Heart left ventricle (tissue), 16 donors: ENCODE measurements at regions of chr5 and their contacts with region 1.

Region 1: GRCh38 chr5:172463031-172463430 is 8.7 kb upstream of the SH3PXD2B start:
- DNase-seq: no peak
- ATAC-seq: no peak
- H3K4me3 ChIP-seq: no peak overlapping the region
- H3K27ac ChIP-seq: no peak overlapping the region
- H3K4me1 ChIP-seq: peaks cover 0 to 35% (median 3%) of the 10 kb centered on the region in 12 donors
- H3K27me3 ChIP-seq: no peaks in the 10 kb centered on the region
- CTCF ChIP-seq: no peak
- POLR2A ChIP-seq: no peak

Region 2: DNA sequence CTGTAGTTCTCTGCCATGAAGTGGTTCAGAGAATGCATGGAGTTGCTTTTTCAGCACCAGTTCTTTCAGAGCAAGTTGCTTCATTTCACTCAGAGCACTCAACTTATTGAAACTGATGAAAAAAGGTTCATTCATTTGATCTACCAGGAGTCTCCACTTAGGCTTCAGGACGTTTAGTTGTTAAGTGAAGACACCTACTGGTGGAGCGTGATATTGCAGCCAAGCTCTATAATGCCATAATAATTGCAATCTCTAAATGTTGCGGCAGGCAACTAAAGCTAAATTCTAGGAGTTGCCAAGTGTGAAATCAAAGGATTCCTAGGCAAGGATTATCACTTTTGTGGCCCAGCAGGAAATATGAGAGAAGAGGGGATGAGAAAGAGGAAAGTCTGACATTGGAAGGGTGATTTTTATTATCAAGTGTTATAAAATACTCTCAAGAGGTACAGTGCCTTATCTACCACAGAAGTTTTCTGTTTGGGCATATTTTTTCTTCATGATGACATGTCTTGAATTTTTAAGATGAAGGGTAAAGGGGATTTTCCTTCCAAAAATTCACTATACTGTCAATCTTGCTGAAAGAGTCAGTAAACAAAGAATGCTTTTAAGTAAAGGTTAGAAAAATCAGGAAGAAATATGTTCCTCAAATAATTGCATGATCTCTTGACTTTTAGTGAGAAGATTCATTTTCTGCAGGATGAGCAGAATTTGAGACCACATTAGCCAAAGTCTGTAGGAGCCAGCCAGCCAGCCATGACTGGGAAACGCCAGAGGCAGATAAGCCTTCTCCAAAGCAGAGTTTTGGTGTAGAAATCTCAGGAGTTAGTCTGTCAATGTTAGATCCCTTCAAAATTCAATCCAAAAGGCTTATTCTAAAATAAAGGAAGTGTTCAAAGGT is 92.1 kb before region 1 on chr5:
- intact Hi-C with region 1: no loop called
- DNase-seq: no peak
- ATAC-seq: peak in 1 of 4 donors; percentile 14
- H3K4me3 ChIP-seq: no peak overlapping the region
- H3K27ac ChIP-seq: no peak overlapping the region
- H3K4me1 ChIP-seq: no peaks in the 10 kb centered on the region
- H3K27me3 ChIP-seq: no peaks in the 10 kb centered on the region
- CTCF ChIP-seq: peak in 11 of 12 donors; percentile 11 to 58 (median 40)
- POLR2A ChIP-seq: no peak

Region 3: GRCh38 chr5:172932313-172933017 is 469.4 kb after region 1 on chr5:
- intact Hi-C with region 1: loop called in 1 of 10 experiments (anchors 10 kb)
- DNase-seq: peak; percentile 76 to 90 (median 78)
- ATAC-seq: peak; percentile 65 to 89 (median 84)
- H3K4me3 ChIP-seq: no peak overlapping the region
- H3K27ac ChIP-seq: peak overlapping the region in 11 of 12 donors; percentile 1 to 80 (median 72)
- H3K4me1 ChIP-seq: peaks cover 0 to 25% (median 18%) of the 10 kb centered on the region in 12 donors
- H3K27me3 ChIP-seq: no peaks in the 10 kb centered on the region
- CTCF ChIP-seq: peak; percentile 91 to 99 (median 96)
- POLR2A ChIP-seq: no peak

Region 4: DNA sequence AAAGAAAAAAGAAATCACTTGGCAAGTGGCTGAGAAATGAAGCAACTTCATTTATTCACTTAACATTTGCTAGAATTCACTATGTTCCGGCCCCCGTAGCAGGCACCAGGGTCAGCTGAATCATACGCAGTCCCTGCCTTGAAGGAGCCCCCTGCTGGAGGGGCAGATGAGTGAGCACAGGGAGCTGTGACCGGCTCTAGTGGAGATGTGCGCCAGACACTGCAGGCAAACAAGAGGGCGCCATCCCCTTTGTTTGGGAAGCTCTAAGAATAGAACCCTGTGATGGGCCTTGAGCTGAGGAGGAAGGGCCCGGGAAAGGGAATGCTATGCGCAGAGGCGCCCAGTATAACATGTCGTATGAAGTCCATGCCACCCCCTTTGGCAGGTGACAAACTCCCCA is 476.0 kb after region 1 on chr5:
- intact Hi-C with region 1: loop called in 3 of 10 experiments (anchors 10 kb)
- DNase-seq: peak in 2 of 5 donors; percentile 39 to 44
- ATAC-seq: peak in 3 of 4 donors; percentile 33 to 49 (median 40)
- H3K4me3 ChIP-seq: no peak overlapping the region
- H3K27ac ChIP-seq: peak overlapping the region in 2 of 12 donors; percentile 7 to 20
- H3K4me1 ChIP-seq: peaks cover 0 to 15% (median 0%) of the 10 kb centered on the region in 12 donors
- H3K27me3 ChIP-seq: no peaks in the 10 kb centered on the region
- CTCF ChIP-seq: peak in 8 of 12 donors; percentile 7 to 41 (median 29)
- POLR2A ChIP-seq: no peak

Region 5: DNA sequence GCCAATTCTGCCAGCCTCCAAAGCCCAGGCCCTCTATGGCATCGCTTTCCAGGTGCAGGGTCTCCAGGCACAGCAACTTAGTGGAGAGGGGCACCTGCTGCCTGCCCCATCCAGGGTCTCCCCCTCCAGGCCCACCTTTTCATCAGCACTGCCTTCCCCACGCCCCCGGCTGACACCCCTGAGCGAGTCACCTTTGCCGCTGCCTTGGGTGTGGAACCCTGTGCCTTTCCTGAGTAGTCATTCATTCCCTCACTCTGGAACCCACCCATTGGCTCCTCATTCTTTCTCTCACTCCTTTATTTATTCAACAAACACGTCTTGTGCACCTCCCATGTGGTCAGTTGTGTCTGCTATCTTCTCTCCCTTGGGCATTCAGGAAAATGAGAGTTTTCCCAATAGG is 481.7 kb after region 1 on chr5:
- intact Hi-C with region 1: loop called in 4 of 10 experiments (anchors 5 to 10 kb)
- DNase-seq: peak in 1 of 5 donors; percentile 19
- ATAC-seq: no peak
- H3K4me3 ChIP-seq: no peak overlapping the region
- H3K27ac ChIP-seq: peak overlapping the region in 1 of 12 donors; percentile 83
- H3K4me1 ChIP-seq: peaks cover 0 to 15% (median 0%) of the 10 kb centered on the region in 12 donors
- H3K27me3 ChIP-seq: no peaks in the 10 kb centered on the region
- CTCF ChIP-seq: no peak
- POLR2A ChIP-seq: no peak